PC-9 (cell line): ENCODE measurements at regions of chr21 and their contacts with region 1.

Region 1: DNA sequence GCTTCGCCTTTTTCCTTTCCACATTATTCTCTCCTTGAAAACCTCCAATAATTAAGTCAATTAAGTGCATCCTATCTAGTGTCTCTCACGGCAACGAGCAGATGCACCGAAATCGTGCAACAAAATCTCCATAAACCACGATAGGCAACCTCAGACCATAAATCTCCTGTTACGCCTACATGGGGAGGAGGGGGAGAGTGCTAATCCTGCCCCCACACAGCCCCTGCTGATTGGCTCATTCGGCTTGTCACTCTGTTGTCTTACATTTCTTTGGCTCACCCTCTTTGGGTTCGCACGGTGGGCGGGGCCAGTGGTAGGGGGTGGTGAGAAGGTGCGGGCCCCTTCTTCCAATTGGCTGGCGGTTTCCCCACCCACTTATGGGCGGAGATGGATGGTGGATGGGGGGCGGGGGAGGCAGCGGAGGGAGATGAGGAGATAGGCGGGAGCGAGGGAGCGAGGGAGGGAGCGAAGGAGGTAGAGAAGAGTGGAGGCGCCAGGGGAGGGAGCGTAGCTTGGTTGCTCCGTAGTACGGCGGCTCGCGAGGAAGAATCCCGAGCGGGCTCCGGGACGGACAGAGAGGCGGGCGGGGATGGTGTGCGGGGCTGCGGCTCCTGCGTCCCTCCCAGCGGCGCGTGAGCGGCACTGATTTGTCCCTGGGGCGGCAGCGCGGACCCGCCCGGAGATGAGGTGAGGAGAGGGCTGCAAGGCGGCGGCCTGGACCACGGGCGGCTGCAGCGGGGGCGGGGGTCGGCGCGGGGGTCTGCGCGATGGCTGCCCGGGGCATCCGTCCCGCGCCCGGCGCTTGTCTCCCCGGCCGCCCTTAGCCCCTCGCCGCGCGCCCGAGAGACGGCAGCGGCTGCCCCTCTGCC is at the start of gene ITSN1:
- DNase-seq: peak; percentile 93 to 98
- H3K4me3 ChIP-seq: peak within 1 kb of the TSS; percentile 76
- H3K27ac ChIP-seq: peak within 1 kb of the TSS; percentile 76
- H3K4me1 ChIP-seq: peaks cover 21% of the 10 kb centered on the region
- H3K27me3 ChIP-seq: no peaks in the 10 kb centered on the region
- CTCF ChIP-seq: no peak
- total RNA-seq, gene ITSN1: 39.1 and 46.3 TPM in 2 replicates

Region 2: DNA sequence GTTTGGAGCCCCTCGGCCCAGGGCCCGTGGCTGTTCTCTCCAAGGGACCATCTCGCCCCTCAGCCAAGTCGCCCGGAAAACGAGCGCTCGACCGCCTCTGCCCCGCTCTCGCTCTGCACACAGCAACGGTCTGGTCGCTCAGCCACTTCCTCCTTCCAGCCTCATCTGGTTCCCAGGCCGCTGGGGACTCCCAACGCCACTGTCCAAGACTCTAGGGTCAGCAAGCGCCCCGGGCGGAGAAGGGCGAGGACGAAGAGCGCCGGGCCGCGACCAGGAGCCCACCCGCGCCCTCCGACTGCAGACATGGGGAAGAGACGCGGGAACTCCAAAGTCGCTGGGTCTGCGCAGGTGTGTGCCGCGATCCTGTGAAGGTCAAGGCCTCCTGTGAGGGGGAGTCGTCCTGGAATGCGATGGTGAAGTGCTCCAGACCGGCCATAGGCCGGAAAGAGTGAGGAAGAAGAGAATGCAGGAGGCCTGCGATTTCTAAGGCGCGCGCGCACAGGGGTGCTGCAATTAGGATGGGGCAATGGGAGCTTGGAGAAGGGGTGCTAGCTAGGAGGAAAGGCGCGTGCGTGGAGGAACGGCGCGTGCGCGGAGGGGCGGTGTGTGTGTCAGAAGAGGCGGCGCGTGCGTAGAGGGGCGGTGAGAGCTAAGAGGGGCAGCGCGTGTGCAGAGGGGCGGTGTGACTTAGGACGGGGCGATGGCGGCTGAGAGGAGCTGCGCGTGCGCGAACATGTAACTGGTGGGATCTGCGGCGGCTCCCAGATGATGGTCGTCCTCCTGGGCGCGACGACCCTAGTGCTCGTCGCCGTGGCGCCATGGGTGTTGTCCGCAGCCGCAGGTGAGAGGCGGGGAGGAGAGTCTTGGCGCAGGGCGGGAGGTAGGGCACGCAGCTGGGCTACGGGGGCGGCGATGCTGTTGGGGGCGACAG is 317.7 kb before region 1 on chr21 and contains the start of gene IFNAR1:
- CTCF ChIA-PET with region 1: no interaction called
- POLR2A ChIA-PET with region 1: interaction called, 11 read pairs
- intact Hi-C with region 1: no loop called
- DNase-seq: peak; percentile 80 to 92
- H3K4me3 ChIP-seq: peak within 1 kb of the TSS; percentile 97
- H3K27ac ChIP-seq: peak within 1 kb of the TSS; percentile 78
- H3K4me1 ChIP-seq: peaks cover 10% of the 10 kb centered on the region; the same call in 1 of the 2 replicates
- H3K27me3 ChIP-seq: no peaks in the 10 kb centered on the region
- CTCF ChIP-seq: no peak
- total RNA-seq, gene IFNAR1: 24.2 and 25.5 TPM in 2 replicates

Region 3: GRCh38 chr21:33682992-33683627 is 40.8 kb after region 1 on chr21:
- CTCF ChIA-PET with region 1: no interaction called
- POLR2A ChIA-PET with region 1: no interaction called
- intact Hi-C with region 1: loop called (anchors 1 kb)
- DNase-seq: peak; percentile 61 to 96
- H3K4me3 ChIP-seq: peak overlapping the region; percentile 14; the same call in 1 of the 2 replicates
- H3K27ac ChIP-seq: peak overlapping the region; percentile 85
- H3K4me1 ChIP-seq: peaks cover 64% of the 10 kb centered on the region
- H3K27me3 ChIP-seq: no peaks in the 10 kb centered on the region
- CTCF ChIP-seq: no peak

Region 4: DNA sequence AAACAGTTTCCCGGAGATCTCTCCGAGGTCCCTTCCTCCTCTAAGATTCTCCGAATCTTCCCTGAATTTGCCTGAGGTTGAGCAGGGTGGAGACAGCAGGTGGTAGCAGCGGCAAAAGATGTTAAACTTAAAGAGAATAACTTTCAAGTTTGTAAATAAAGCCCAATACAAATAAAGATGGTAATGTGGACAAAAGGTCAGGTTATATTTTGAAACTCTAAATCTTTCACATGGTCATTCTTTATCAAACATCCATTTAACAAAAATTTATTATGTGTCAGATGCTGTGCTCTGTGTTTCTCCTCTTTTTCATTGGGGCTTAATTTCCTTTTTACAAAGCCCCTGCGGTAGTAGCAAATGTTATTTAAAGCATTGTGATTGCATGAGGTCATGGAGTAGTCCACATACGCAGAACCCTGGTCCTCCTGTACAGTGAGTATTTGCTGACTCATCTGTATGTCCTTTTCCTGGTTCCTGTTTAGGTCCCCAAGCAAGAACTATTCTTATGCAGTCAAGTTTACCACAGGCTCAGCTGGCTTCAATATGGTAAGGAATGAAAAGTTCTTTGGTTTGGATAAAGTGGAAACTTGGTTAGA is 119.3 kb after region 1 on chr21:
- CTCF ChIA-PET with region 1: no interaction called
- POLR2A ChIA-PET with region 1: no interaction called
- intact Hi-C with region 1: loop called (anchors 1 kb)
- DNase-seq: peak; percentile 37 to 94
- H3K4me3 ChIP-seq: peak overlapping the region; percentile 47; the same call in 1 of the 2 replicates
- H3K27ac ChIP-seq: peak overlapping the region; percentile 92
- H3K4me1 ChIP-seq: peaks cover 33% of the 10 kb centered on the region
- H3K27me3 ChIP-seq: no peaks in the 10 kb centered on the region
- CTCF ChIP-seq: no peak

Region 5: DNA sequence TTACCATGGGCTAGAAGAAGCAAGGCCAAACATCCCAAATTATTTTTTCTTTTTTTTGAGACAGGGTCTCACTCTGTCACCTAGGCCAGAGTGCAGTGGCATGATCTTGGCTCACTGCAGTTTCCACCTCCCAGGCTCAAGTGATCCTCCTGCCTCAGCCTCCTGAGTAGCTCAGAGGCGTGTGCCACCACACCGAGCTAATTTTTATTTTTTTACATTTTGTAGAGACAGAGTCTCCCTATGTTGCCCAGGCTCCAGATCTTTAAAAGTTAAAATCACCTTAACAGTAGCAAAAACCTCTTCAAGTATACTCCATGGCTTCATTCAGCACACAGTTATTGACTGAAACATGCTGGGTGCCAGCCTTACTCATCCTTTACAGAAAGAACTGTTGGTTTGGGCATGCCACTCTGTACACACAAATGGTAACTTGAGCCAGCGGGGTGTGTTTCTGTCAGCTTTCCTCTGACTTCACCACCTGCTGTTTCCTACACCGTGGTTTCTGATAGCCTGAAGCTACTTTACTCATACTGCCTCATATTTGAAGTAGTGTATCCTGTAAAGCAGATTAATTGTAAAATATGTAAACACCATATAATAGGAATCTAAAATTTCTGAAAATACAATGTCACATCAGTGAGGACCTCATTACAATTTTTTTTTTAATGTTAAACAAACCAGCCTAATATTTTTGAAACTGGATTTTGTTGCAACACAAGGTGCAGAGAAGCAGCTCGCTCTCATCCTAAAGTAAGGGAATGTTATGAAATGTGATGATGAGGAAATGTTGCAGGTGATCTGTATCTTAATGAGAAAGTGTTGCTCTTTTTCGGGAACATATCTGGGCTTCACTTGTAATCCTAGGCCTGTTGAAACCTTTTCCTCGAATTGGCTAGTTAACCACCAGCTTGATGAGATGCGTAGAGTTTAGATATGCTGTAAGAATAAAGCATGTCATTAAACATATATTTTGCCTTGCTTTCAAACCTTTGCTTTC is 159.5 kb after region 1 on chr21:
- CTCF ChIA-PET with region 1: no interaction called
- POLR2A ChIA-PET with region 1: interaction called, 5 read pairs
- intact Hi-C with region 1: loop called (anchors 1 kb)
- DNase-seq: peak; percentile 72 to 96
- H3K4me3 ChIP-seq: peak overlapping the region; percentile 22; the same call in 1 of the 2 replicates
- H3K27ac ChIP-seq: peak overlapping the region; percentile 79
- H3K4me1 ChIP-seq: peaks cover 41% of the 10 kb centered on the region
- H3K27me3 ChIP-seq: no peaks in the 10 kb centered on the region
- CTCF ChIP-seq: no peak

Region 6: DNA sequence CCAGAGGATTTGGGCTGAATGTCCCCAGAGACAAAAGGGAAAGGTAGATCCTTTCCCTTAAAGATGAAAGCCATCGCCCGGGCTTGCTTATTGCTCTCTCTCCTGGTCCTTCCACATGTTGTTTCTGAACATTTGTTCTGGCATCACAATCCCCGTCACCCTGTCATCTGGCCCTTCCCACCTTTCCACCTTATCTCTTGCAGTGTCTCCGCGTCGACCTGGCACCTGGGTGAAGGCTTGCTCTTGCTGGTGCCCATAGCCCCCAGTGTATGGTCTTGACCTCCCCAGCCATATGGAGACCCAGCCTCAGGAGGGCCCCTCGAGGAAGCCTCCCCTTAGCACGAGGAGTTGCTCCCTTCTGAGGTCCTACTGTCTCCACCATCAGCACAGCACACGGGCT is 208.7 kb after region 1 on chr21:
- CTCF ChIA-PET with region 1: no interaction called
- POLR2A ChIA-PET with region 1: interaction called, 32 read pairs
- intact Hi-C with region 1: no loop called
- DNase-seq: no peak
- H3K4me3 ChIP-seq: no peak overlapping the region
- H3K27ac ChIP-seq: no peak overlapping the region
- H3K4me1 ChIP-seq: peaks cover 24% of the 10 kb centered on the region
- H3K27me3 ChIP-seq: no peaks in the 10 kb centered on the region
- CTCF ChIP-seq: no peak

Region 7: DNA sequence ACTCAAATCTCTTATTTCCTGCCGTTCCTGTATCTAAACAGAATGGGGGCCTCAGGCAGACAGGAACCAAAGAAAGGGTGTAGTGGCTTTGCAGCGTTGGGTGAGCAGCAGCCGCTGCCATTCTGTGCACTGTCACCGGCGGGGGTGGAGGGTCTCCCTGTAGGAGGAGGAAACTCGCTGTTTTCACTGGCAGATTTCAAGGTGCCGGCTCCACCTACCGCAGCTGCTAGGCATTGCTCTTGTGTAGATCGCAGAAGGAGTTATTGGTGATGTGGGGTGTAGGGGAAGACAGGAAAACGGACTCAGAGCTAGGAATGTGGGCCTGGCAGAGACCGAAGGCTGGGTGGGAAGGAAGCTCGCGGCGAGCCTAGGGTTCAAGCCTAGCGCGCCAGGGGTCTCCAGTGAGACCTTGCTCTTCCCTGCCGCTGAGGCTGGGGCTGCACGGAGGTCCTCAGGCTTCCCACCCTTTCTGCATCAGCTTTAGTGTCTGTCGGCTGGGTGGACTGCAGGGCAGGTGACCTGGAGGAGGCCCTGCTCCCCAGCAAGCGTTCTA is 252.6 kb after region 1 on chr21:
- CTCF ChIA-PET with region 1: no interaction called
- POLR2A ChIA-PET with region 1: no interaction called
- intact Hi-C with region 1: loop called (anchors 10 kb)
- DNase-seq: peak in 1 of 2 experiments; percentile 66
- H3K4me3 ChIP-seq: no peak overlapping the region
- H3K27ac ChIP-seq: no peak overlapping the region
- H3K4me1 ChIP-seq: 0 out of 2 replicates have a peak, but pooled peaks cover 7% of the 10 kb centered on the region
- H3K27me3 ChIP-seq: no peaks in the 10 kb centered on the region
- CTCF ChIP-seq: peak; percentile 63